A673 (cell line): ENCODE measurements at regions of chrX and their contacts with region 1.

Region 1: GRCh38 chrX:13487731-13488523 is 81.5 kb upstream of the EGFL6 start:
- DNase-seq: peak; percentile 88
- H3K4me3 ChIP-seq: no peak overlapping the region
- H3K27ac ChIP-seq: peak overlapping the region; percentile 82
- H3K4me1 ChIP-seq: peaks cover 10% of the 10 kb centered on the region
- H3K27me3 ChIP-seq: peaks cover 11% of the 10 kb centered on the region
- CTCF ChIP-seq: peak; percentile 61

Region 2: GRCh38 chrX:12814420-12814819 is 673.5 kb before region 1 on chrX:
- CTCF ChIA-PET with region 1: no interaction called
- POLR2A ChIA-PET with region 1: no interaction called
- intact Hi-C with region 1: loop called (anchors 5 kb)
- DNase-seq: peak; percentile 52
- H3K4me3 ChIP-seq: no peak overlapping the region
- H3K27ac ChIP-seq: no peak overlapping the region
- H3K4me1 ChIP-seq: no peaks in the 10 kb centered on the region
- H3K27me3 ChIP-seq: no peaks in the 10 kb centered on the region
- CTCF ChIP-seq: peak; percentile 61

Region 3: DNA sequence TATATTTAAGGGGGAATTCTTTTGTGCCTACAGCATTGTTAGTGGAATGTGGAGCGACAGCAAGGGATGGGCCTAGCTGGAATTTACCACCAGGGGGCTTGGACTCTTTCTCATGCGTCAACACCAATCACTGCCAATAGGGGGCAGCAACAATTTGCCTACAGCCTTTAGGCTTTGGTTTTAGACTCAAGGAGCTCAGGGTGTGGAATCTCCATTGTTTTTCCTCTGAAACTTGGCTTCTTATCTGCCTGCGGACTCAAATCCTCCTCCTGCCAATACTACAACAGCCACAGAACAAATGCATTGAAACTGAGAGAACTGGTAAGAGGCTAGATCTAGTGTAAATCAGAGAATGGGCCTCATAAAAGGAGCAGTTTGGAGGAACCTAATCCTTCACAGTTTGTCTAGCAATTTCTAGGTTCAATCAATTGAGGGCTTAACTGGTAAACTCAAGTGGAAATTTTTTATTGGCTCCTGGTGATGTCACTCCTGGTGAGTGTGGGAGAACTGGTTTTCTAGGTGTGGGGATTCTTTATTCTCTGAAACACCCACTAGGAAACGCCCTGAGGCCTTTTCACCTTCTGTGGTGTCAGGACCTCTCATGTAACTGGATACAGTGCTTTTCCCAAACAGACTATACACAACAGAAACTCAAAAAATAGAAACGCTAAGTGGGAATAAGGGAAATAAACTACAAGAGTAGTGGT is 540.9 kb before region 1 on chrX:
- CTCF ChIA-PET with region 1: interaction called, 55 read pairs
- POLR2A ChIA-PET with region 1: interaction called, 6 read pairs
- intact Hi-C with region 1: loop called (anchors 1 kb)
- DNase-seq: peak; percentile 89
- H3K4me3 ChIP-seq: no peak overlapping the region
- H3K27ac ChIP-seq: peak overlapping the region; percentile 51
- H3K4me1 ChIP-seq: peaks cover 37% of the 10 kb centered on the region
- H3K27me3 ChIP-seq: no peaks in the 10 kb centered on the region
- CTCF ChIP-seq: peak; percentile 99

Region 4: GRCh38 chrX:12974796-12975669 is 512.9 kb before region 1 on chrX and contains the start of gene TMSB4X:
- CTCF ChIA-PET with region 1: no interaction called
- POLR2A ChIA-PET with region 1: no interaction called
- intact Hi-C with region 1: loop called (anchors 2 kb)
- DNase-seq: peak; percentile 85
- H3K4me3 ChIP-seq: peak within 1 kb of the TSS; percentile 62
- H3K27ac ChIP-seq: peak within 1 kb of the TSS; percentile 81
- H3K4me1 ChIP-seq: peaks cover 6% of the 10 kb centered on the region
- H3K27me3 ChIP-seq: no peaks in the 10 kb centered on the region
- CTCF ChIP-seq: no peak
- total RNA-seq, gene TMSB4X: 975 and 1,093 TPM in 2 replicates

Region 5: DNA sequence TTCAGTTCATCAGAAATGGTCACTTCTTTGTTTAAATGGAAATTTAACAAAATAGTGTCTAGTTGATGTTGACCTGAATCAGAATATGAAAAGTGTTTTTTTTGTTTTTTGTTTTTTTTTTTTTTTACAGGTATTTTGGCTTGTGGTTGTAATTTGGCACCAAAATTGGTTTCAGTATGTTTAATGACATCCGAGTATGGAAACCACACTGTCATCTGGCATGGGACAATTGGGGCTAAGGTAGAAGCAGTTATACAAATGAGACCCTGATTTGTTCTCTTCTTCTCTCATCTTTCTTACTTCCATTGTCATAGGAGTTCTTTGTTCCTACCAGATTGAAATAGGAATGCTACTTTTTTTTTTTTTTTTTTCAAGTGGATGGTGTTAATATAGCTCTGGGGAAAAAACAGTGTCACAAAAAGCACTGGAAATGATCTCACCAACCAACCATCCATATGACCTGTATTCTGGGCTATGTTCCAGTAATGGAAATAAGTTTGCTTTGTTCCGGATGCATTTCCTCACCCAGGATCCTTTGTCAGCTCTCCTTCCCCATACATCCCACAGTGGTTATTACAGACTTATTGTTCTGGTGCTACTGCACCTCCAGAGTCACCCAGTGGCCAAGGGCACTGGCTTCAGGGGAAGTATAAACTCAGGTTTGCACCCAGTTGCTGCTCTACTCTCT is 263.9 kb before region 1 on chrX:
- CTCF ChIA-PET with region 1: no interaction called
- POLR2A ChIA-PET with region 1: no interaction called
- intact Hi-C with region 1: loop called (anchors 5 kb)
- DNase-seq: peak; percentile 89
- H3K4me3 ChIP-seq: no peak overlapping the region
- H3K27ac ChIP-seq: no peak overlapping the region
- H3K4me1 ChIP-seq: no peaks in the 10 kb centered on the region
- H3K27me3 ChIP-seq: no peaks in the 10 kb centered on the region
- CTCF ChIP-seq: no peak